Upper lobe of right lung (tissue), 1 donor: ENCODE measurements at regions of chr17 and their contacts with region 1.

Region 1: DNA sequence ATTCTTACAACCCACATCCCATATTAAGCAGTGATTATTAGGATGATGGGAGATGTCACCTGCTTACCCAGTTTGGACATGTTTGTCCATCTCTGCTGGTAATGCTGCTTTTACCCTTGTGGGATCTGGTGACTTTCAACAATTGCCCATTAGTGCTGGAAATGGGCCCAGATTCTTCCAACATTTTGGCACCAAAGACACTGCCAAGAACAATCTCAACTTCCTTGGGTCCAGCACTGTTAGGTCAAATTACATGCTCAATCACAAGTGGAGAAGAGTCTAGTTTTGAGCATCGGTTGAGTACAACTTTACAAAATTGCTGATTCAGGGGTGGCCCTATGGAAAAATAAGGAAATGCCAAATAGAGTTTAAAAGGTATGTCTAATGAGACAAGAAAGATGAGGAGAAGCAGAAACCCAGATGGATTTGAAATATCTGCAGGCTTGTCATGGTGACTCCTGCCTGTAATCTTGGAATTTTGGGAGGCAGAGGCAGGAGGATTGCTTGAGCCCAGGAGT is 13.0 kb upstream of the ZFP3 start:
- DNase-seq: no peak
- ATAC-seq: no peak
- H3K4me3 ChIP-seq: no peak overlapping the region
- H3K27ac ChIP-seq: no peak overlapping the region
- H3K4me1 ChIP-seq: no peaks in the 10 kb centered on the region
- H3K27me3 ChIP-seq: no peaks in the 10 kb centered on the region
- CTCF ChIP-seq: no peak

Region 2: DNA sequence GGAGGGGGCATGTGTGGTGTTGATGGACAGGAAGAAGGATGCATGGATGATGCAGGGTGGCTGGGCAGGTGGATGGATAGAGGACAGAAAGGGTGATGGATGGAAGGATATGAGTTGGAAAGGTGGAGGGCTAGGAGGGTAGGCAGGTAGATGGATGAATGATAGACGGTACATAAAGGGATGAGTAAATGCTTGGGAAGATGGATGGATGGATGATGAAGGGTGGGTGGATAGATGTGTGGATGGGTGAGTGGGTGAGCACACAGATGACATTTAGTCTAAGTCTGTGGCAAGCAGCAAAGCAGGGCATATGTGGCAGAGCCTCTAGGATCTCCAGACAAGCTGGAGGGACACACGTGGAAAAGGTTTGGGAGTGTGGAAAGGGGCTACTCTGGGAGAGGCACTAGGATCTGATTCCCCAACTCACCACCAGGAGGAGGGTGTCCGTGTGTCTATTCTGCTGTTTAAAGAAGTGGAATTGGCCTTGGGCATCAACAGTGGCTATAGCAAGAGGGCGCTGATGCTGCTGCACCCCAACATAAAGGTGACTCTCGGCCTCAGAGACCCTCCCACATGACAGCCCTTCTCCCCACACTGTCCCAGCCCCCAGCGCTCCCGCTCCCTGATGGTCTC is 250.1 kb before region 1 on chr17:
- intact Hi-C with region 1: no loop called
- DNase-seq: no peak
- ATAC-seq: no peak
- H3K4me3 ChIP-seq: no peak overlapping the region
- H3K27ac ChIP-seq: no peak overlapping the region
- H3K4me1 ChIP-seq: no peaks in the 10 kb centered on the region
- H3K27me3 ChIP-seq: no peaks in the 10 kb centered on the region
- CTCF ChIP-seq: no peak

Region 3: GRCh38 chr17:4903051-4903818 is 162.1 kb before region 1 on chr17 and contains the start of gene CHRNE:
- intact Hi-C with region 1: loop called (anchors 10 kb)
- DNase-seq: no peak
- ATAC-seq: peak; percentile 53
- H3K4me3 ChIP-seq: peak within 1 kb of the TSS; percentile 6
- H3K27ac ChIP-seq: peak within 1 kb of the TSS; percentile 42
- H3K4me1 ChIP-seq: peaks cover 9% of the 10 kb centered on the region
- H3K27me3 ChIP-seq: peaks cover 6% of the 10 kb centered on the region
- CTCF ChIP-seq: peak; percentile 77
- total RNA-seq, gene CHRNE: 0.98 TPM

Region 4: DNA sequence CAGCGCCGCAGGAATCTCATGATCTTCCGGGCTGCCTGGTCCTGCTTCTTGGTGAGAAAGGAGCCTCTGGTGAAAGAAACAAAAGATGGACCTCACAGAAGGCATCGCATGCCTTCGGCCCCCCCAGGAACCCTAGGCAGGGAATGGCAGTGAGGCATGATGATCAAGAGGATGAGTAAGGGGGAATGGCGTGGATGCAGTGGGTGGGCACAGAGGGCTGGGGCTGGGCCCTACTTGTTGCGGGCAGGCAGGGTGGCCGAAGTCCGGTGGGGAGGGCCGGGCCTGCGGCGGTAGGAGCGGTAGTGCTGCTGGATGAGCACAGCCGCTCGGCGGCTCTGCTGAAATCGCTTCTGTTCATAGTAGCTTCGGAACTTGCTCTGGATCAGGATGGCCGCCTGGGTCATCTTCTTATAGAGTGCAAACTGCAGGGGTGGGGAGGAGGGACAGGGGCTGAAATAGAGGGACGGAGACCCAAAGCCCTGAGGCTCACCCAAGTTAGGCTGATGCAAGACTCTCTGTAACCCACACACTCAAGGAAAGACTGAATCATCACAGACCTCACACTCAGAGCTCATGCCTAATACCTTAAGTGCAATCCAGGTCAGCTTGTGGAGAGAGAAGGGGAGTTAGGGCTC is 96.3 kb before region 1 on chr17:
- intact Hi-C with region 1: no loop called
- DNase-seq: no peak
- ATAC-seq: no peak
- H3K4me3 ChIP-seq: peak overlapping the region; percentile 71
- H3K27ac ChIP-seq: peak overlapping the region; percentile 96
- H3K4me1 ChIP-seq: peaks cover 25% of the 10 kb centered on the region
- H3K27me3 ChIP-seq: no peaks in the 10 kb centered on the region
- CTCF ChIP-seq: no peak

Region 5: DNA sequence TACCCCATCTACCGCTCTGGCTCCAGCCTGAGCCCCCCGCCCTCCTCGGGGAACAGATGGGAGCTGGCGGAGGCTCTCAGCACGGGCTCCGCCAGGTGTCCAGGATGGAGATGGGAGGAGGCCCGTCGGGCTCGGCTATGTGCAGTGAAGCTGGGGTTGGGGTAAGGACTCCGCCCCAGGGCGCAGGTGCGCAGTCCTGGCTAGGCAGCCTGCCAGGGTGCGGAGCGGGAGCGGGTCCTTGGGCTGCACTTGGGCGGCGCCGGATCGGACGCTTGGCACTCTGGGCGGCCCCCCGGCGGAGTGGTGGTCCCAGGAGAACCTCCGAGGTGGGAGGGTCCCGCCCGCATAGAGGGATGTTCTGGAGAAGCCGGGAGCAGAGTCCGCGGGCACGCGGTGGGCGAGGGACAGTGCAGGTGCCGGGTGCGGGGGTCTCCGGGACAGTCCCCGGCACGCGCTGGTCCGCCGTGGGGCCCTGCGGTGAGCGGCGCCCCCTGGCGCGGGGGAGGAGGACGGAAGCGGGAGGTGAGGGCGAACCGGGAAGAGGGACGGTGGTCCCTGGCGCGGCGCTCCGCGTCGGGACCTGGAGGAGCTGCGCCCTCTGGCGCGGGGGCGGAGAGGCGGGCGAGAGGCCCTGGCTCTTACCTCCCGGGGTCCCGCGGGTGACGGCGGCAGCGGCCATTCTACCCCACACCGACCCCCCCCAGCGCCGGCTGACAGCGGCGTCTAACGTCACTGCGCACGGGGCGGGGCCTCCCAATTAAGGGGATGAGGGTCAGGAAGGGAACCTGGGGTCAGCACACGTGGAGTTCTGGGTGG is 78.1 kb before region 1 on chr17 and contains the start of gene CAMTA2:
- intact Hi-C with region 1: loop called (anchors 10 kb)
- DNase-seq: peak; percentile 96
- ATAC-seq: peak; percentile 94
- H3K4me3 ChIP-seq: peak within 1 kb of the TSS; percentile 91
- H3K27ac ChIP-seq: peak within 1 kb of the TSS; percentile 93
- H3K4me1 ChIP-seq: peaks cover 15% of the 10 kb centered on the region
- H3K27me3 ChIP-seq: no peaks in the 10 kb centered on the region
- CTCF ChIP-seq: peak; percentile 69
- total RNA-seq, gene CAMTA2: 55.8 TPM